BJ (cell line): ENCODE measurements at regions of chr18 and their contacts with region 1.

Region 1: DNA sequence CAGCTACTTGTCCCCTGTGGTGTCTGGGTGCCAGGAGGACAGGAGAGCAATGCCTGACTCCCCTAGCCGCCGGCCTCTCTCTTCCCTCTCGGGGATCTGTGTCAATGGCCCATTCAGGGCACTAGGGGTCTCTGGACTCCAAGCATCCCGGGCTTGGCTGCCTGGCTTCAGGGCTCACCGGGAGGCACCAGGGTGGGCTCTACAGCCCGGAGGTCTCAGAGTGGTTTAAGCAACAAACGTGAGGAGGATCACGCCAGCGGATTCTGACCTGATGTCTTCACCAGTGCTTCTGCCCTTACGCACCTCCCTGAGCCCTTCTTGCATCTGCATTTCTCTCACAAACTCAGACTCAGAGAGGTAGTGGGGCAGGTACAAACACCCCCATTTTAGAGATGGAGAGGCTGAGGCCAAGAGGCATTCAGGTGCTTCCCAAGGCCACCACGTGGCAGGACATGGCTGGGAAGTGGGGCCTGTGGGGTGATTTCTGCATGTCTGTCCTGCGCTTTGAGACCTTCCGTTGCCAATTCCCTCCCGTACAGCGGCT is 243.0 kb downstream of the CELF4 start:
- DNase-seq: no peak
- H3K4me3 ChIP-seq: no peak overlapping the region
- H3K27me3 ChIP-seq: peaks cover 4% of the 10 kb centered on the region
- CTCF ChIP-seq: peak; percentile 88

Region 2: DNA sequence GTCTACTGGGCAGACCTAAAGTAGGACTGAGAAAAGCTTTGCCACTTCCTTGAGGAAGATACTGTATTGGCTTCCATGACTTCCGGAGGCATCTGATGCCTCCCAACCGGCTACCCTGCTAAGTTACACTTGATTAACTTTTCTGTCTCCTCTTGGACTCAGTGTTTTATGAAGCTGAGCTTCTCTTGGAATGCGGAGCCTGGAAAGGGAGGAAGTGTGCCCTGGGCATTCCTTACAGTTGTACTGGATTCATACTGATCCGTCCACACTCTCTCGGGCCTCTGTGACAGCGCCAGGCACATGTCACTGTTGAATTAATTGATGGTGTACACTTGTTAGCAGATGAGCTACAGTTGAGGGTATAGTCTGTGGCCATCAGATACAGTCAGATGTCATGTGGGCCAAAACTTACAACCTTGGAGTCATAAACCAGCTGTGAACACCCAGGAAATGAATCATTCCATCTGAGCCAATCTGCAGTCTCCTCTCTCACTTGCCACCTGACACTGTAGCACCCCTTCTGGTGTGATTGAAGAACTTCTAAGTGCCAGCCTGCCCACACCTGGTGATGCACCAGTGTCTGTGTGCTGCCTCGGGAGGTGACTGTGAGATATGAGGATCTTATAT is 902.5 kb before region 1 on chr18:
- CTCF ChIA-PET with region 1: no interaction called
- POLR2A ChIA-PET with region 1: no interaction called
- DNase-seq: no peak
- H3K4me3 ChIP-seq: no peak overlapping the region
- H3K27me3 ChIP-seq: no peaks in the 10 kb centered on the region
- CTCF ChIP-seq: no peak

Region 3: GRCh38 chr18:37309055-37309454 is 13.5 kb before region 1 on chr18:
- CTCF ChIA-PET with region 1: interaction called, 17 read pairs
- POLR2A ChIA-PET with region 1: no interaction called
- DNase-seq: no peak
- H3K4me3 ChIP-seq: no peak overlapping the region
- H3K27me3 ChIP-seq: no peaks in the 10 kb centered on the region
- CTCF ChIP-seq: no peak

Region 4: DNA sequence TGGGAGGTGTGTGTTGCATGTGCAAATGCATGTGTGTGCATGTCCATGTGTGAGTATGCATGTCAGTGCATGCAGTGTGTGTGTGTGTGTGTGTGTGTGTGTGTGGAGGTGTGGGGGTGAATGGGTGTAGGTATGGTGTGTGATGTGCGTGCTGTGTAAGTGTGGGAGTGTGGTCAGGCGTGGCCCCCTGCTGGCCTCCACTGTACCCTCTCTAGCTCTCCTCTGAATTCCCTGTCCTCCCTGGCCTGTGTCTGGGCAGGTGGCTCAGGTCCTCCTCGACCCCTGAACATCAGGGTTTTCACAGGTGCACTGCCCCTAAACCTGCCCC is 12.8 kb after region 1 on chr18:
- CTCF ChIA-PET with region 1: interaction called, 11 read pairs
- POLR2A ChIA-PET with region 1: no interaction called
- DNase-seq: no peak
- H3K4me3 ChIP-seq: no peak overlapping the region
- H3K27me3 ChIP-seq: no peaks in the 10 kb centered on the region; the same call in 1 of the 2 replicates
- CTCF ChIP-seq: 0 out of 2 replicates have a peak, but pooled peaks have one; percentile 19

Region 5: GRCh38 chr18:37341016-37341415 is 18.5 kb after region 1 on chr18:
- CTCF ChIA-PET with region 1: interaction called, 12 read pairs
- POLR2A ChIA-PET with region 1: no interaction called
- DNase-seq: no peak
- H3K4me3 ChIP-seq: no peak overlapping the region
- H3K27me3 ChIP-seq: peaks cover 2% of the 10 kb centered on the region; the same call in 1 of the 2 replicates
- CTCF ChIP-seq: no peak

Region 6: DNA sequence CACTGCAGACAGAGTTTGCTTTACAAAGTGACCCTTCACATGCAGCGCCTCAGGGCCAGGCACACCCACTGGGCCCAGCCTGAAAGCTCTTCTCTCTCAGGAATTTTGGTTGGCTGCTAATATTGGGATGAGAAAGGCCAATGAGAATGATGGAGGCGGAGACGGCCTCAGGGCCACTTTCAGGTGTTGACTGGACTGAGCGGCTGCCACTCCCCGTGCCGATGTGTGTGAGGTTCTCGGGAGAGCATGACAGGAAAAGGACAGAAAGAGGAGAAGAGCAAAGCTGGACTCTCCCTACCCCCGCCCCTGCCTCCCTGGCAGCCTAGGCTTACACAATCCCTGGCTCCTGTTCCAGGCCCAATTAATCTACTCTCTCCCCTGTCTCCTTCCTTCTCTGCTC is 87.3 kb after region 1 on chr18:
- CTCF ChIA-PET with region 1: no interaction called
- POLR2A ChIA-PET with region 1: no interaction called
- DNase-seq: no peak
- H3K4me3 ChIP-seq: no peak overlapping the region
- H3K27me3 ChIP-seq: no peaks in the 10 kb centered on the region; the same call in 1 of the 2 replicates
- CTCF ChIP-seq: no peak